Transverse colon (tissue), 4 donors: ENCODE measurements at regions of chr13 and their contacts with region 1.

Region 1: GRCh38 chr13:64180756-64181155 is 2765.1 kb upstream of the PCDH20 start:
- DNase-seq: no peak
- H3K4me3 ChIP-seq: no peak overlapping the region
- H3K27ac ChIP-seq: no peak overlapping the region
- H3K4me1 ChIP-seq: no peaks in the 10 kb centered on the region
- H3K27me3 ChIP-seq: no peaks in the 10 kb centered on the region
- CTCF ChIP-seq: no peak
- EP300 ChIP-seq: no peak
- POLR2A ChIP-seq: no peak

Region 2: DNA sequence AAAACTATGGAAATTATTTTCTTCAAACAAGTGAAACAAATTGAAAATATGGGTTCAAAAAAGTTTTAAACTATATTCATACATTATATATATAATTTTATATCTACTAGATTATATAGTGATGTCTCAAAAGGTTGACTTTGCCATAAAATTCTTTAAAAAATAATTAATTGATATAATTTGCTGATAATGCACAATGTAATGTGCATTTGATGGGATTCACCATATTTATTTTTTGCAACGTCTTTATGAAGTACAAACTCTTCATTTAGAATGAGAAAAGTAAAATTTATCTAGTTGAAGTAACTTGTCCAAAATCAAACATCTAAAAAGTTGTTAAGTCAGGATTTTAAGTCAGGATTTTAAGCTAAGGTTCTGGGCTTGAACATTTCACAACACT is 810.7 kb before region 1 on chr13:
- in situ Hi-C with region 1: no loop called
- intact Hi-C with region 1: loop called (anchors 5 kb)
- DNase-seq: no peak
- H3K4me3 ChIP-seq: no peak overlapping the region
- H3K27ac ChIP-seq: no peak overlapping the region
- H3K4me1 ChIP-seq: no peaks in the 10 kb centered on the region
- H3K27me3 ChIP-seq: no peaks in the 10 kb centered on the region
- CTCF ChIP-seq: no peak
- EP300 ChIP-seq: no peak
- POLR2A ChIP-seq: no peak

Region 3: GRCh38 chr13:63896321-63896720 is 284.4 kb before region 1 on chr13:
- in situ Hi-C with region 1: no loop called
- intact Hi-C with region 1: no loop called
- DNase-seq: no peak
- H3K4me3 ChIP-seq: no peak overlapping the region
- H3K27ac ChIP-seq: no peak overlapping the region
- H3K4me1 ChIP-seq: no peaks in the 10 kb centered on the region
- H3K27me3 ChIP-seq: no peaks in the 10 kb centered on the region
- CTCF ChIP-seq: no peak
- EP300 ChIP-seq: no peak
- POLR2A ChIP-seq: no peak